Mammary epithelial cell (primary cell): ENCODE measurements at regions of chr9 and their contacts with region 1.

Region 1: GRCh38 chr9:76516350-76516749 is 57.4 kb downstream of the GCNT1 start:
- DNase-seq: peak; percentile 16
- H3K4me3 ChIP-seq: no peak overlapping the region
- H3K27ac ChIP-seq: no peak overlapping the region
- H3K4me1 ChIP-seq: peaks cover 35% of the 10 kb centered on the region
- H3K27me3 ChIP-seq: no peaks in the 10 kb centered on the region
- CTCF ChIP-seq: no peak

Region 2: GRCh38 chr9:76458903-76459690 is 57.3 kb before region 1 on chr9 and contains the start of gene GCNT1:
- CTCF ChIA-PET with region 1: interaction called, 4 read pairs
- dilution Hi-C with region 1: no loop called
- in situ Hi-C with region 1: no loop called
- intact Hi-C with region 1: loop called (anchors 1 kb)
- DNase-seq: peak; percentile 95
- H3K4me3 ChIP-seq: peak within 1 kb of the TSS; percentile 89 to 98 (median 97)
- H3K27ac ChIP-seq: peak within 1 kb of the TSS; percentile 95
- H3K4me1 ChIP-seq: peaks cover 14% of the 10 kb centered on the region
- H3K27me3 ChIP-seq: no peaks in the 10 kb centered on the region
- CTCF ChIP-seq: peak; percentile 2 to 49
- total RNA-seq, gene GCNT1: 39.8 to 97.0 TPM

Region 3: GRCh38 chr9:76464706-76465105 is 51.6 kb before region 1 on chr9:
- CTCF ChIA-PET with region 1: no interaction called
- dilution Hi-C with region 1: loop called (anchors 5 kb)
- in situ Hi-C with region 1: no loop called
- intact Hi-C with region 1: loop called (anchors 1 kb)
- DNase-seq: no peak
- H3K4me3 ChIP-seq: no peak overlapping the region
- H3K27ac ChIP-seq: no peak overlapping the region
- H3K4me1 ChIP-seq: peaks cover 8% of the 10 kb centered on the region
- H3K27me3 ChIP-seq: no peaks in the 10 kb centered on the region
- CTCF ChIP-seq: no peak

Region 4: DNA sequence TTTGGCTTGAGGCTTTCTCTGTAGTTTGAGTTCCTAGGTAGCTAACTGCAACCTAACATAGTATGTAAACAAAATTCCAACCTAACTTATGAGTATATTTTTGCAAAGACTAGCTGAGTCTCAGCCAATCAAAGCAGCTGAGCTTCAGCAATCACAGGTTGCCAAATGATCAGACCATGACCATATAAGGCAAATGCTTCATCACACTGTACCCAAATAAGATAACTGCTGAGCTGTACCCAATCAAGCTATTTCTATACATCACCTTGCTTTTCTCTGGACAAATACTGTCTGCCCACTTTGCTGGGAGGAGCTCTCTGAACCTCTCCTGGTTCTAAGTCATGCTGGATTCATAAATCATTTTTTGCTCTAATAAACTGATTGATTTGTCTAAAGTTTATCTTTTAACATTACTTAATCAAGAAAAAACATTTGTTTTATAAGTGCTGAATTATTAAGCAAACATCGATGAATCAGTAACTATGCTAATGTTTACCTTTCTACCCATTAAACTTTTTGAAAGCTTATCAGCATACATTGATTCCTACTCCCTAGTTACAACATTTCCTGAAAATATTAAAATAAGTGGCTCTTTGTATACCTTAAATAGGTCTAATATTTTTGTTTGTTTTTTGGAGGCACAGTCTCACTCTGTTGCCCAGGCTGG is 118.1 kb after region 1 on chr9:
- CTCF ChIA-PET with region 1: no interaction called
- dilution Hi-C with region 1: no loop called
- in situ Hi-C with region 1: no loop called
- intact Hi-C with region 1: loop called (anchors 5 kb)
- DNase-seq: peak; percentile 63
- H3K4me3 ChIP-seq: no peak overlapping the region
- H3K27ac ChIP-seq: peak overlapping the region; percentile 32
- H3K4me1 ChIP-seq: peaks cover 18% of the 10 kb centered on the region
- H3K27me3 ChIP-seq: no peaks in the 10 kb centered on the region
- CTCF ChIP-seq: no peak

Region 5: DNA sequence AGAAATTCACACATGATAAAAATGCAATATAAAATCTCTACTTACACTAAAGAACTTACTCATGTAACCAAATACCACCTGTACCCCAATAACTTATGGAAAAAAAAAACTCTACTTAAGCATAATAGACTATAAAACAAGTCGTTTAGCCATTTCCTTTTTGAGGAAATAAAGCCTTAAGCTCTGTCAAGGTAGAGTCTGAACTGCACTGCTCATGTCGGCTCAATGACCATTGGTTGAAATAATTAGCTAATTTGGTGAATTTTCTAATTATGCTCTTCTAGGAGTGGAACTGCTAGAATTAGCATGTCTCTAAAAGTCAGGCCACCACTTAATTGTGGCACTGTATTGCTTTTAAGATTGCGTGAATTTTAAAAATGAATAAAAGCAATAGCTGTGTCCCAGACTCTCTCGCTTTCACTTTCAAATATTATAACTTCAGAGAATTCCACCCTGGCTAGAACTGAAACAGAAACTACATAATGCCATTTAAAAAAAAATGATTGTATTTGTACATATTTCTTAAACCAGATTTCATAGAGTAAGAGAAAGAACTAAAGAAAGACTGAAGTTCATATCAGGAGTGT is 134.9 kb after region 1 on chr9:
- CTCF ChIA-PET with region 1: no interaction called
- dilution Hi-C with region 1: no loop called
- in situ Hi-C with region 1: no loop called
- intact Hi-C with region 1: loop called (anchors 2 kb)
- DNase-seq: no peak
- H3K4me3 ChIP-seq: no peak overlapping the region
- H3K27ac ChIP-seq: no peak overlapping the region
- H3K4me1 ChIP-seq: peaks cover 25% of the 10 kb centered on the region
- H3K27me3 ChIP-seq: no peaks in the 10 kb centered on the region
- CTCF ChIP-seq: no peak